Panc1 (cell line): ENCODE measurements at regions of chr18 and their contacts with region 1.

Region 1: GRCh38 chr18:49183921-49184320 is 233.2 kb upstream of the SMAD7 start:
- DNase-seq: no peak
- ATAC-seq: no peak
- H3K4me3 ChIP-seq: no peak overlapping the region
- H3K27ac ChIP-seq: no peak overlapping the region
- H3K4me1 ChIP-seq: no peaks in the 10 kb centered on the region; the same call in 1 of the 2 replicates
- H3K27me3 ChIP-seq: no peaks in the 10 kb centered on the region
- CTCF ChIP-seq: no peak

Region 2: DNA sequence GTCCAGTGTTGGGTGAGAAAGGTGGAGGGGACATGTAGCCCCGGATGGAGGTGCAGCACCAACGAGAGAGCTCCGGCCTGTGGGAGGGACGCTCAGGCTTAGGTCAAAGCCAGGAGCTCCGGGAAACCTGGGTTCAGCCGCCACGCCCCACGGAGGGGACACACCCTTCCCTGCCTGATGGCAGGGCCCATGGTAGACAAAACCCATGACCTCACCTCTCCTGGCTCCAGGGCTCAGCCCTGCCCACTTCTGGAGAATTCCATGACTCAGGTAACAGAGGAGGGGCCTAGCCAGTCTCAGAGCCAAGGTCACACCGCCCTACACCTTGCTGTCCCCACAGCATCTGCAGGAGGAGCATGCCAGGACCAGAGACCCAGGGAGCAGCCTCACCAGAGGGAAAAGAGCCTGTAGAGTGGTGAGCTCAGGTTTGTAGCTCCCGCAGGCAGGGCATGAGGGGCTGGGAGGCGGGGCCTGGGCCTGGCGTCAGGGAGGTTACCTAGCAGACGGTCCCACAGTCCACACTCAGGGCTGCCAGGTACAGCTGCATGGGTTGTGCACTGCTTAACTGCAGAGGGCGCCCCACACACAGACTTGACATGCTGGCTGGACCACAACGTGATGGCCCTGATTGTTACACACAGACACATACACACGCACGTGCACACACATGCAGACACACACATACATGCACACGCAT is 162.3 kb before region 1 on chr18:
- CTCF ChIA-PET with region 1: no interaction called
- POLR2A ChIA-PET with region 1: no interaction called
- in situ Hi-C with region 1: no loop called
- intact Hi-C with region 1: loop called (anchors 5 kb)
- DNase-seq: no peak
- ATAC-seq: 0 out of 2 replicates have a peak, but pooled peaks have one; percentile 27
- H3K4me3 ChIP-seq: no peak overlapping the region
- H3K27ac ChIP-seq: no peak overlapping the region
- H3K4me1 ChIP-seq: peaks cover 9% of the 10 kb centered on the region
- H3K27me3 ChIP-seq: no peaks in the 10 kb centered on the region
- CTCF ChIP-seq: no peak; the same call in 1 of the 2 replicates